OCI-LY7 (cell line): ENCODE measurements at regions of chr11 and their contacts with region 1.

Region 1: DNA sequence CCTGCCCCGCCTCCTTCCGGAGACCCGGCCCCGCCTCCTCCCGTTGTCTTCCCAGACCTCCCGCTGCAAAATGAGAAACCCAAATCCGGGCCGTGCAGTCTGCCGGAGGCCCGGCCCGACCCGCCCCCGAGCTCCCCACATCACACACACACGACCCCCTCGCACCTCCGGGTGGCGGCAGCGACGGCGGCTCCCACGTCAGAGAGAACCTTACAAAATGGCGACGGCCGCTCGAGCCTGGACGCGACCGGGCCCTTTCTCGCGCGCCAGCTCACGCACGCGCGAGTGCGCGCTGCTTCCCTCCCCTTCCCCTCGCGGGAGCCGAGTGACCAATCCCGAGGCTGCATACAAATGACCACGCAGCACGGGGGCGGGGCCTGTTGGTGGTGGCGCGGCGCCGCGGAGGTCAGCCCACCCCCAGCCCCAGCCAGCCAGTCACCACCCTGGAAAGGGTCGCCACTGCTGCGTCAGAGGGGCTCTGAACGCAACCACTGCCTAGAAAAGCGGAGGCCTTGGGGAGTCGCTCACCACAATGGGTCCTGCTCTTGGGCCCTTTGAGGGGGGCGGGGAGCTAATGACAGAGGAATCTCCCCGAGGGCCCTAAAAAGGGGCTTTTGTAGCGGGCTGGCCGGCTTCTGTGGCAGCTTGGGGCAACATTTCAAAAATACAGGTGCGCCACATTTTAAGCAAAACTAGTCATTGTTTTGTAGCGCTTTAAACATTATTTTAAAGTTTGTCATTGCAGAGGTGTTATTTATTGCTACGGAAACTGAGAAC is at the start of gene RBM4B:
- DNase-seq: peak; percentile 97
- H3K4me3 ChIP-seq: peak within 1 kb of the TSS; percentile 77
- H3K27ac ChIP-seq: peak within 1 kb of the TSS; percentile 87
- H3K4me1 ChIP-seq: peaks cover 44% of the 10 kb centered on the region
- CTCF ChIP-seq: no peak
- total RNA-seq, gene RBM4B: 29.1 and 40.0 TPM in 2 replicates

Region 2: GRCh38 chr11:66408488-66409214 is 269.1 kb before region 1 on chr11:
- CTCF ChIA-PET with region 1: no interaction called
- POLR2A ChIA-PET with region 1: no interaction called
- intact Hi-C with region 1: loop called (anchors 1 kb)
- DNase-seq: peak; percentile 85
- H3K4me3 ChIP-seq: no peak overlapping the region
- H3K27ac ChIP-seq: no peak overlapping the region
- H3K4me1 ChIP-seq: peaks cover 4% of the 10 kb centered on the region
- CTCF ChIP-seq: peak; percentile 100

Region 3: GRCh38 chr11:66545701-66546367 is 132.0 kb before region 1 on chr11 and contains the start of gene ZDHHC24:
- CTCF ChIA-PET with region 1: interaction called, 7 read pairs
- POLR2A ChIA-PET with region 1: interaction called, 11 read pairs
- intact Hi-C with region 1: loop called (anchors 1 kb)
- DNase-seq: peak; percentile 91
- H3K4me3 ChIP-seq: peak within 1 kb of the TSS; percentile 89
- H3K27ac ChIP-seq: peak within 1 kb of the TSS; percentile 79
- H3K4me1 ChIP-seq: peaks cover 33% of the 10 kb centered on the region
- CTCF ChIP-seq: no peak
- total RNA-seq, gene ZDHHC24: 11.3 and 11.9 TPM in 2 replicates

Region 4: GRCh38 chr11:66592457-66593302 is 85.1 kb before region 1 on chr11 and contains the starts of genes CCDC87 and CCS:
- CTCF ChIA-PET with region 1: interaction called, 3 read pairs
- POLR2A ChIA-PET with region 1: interaction called, 4 read pairs
- intact Hi-C with region 1: loop called (anchors 5 kb)
- DNase-seq: peak; percentile 97
- H3K4me3 ChIP-seq: peak within 1 kb of the TSS; percentile 73
- H3K27ac ChIP-seq: no peak within 1 kb of the TSS
- H3K4me1 ChIP-seq: peaks cover 29% of the 10 kb centered on the region
- CTCF ChIP-seq: peak; percentile 71
- total RNA-seq, gene CCDC87: 0.13 and 0.26 TPM in 2 replicates
- total RNA-seq, gene CCS: 31.7 and 32.6 TPM in 2 replicates

Region 5: DNA sequence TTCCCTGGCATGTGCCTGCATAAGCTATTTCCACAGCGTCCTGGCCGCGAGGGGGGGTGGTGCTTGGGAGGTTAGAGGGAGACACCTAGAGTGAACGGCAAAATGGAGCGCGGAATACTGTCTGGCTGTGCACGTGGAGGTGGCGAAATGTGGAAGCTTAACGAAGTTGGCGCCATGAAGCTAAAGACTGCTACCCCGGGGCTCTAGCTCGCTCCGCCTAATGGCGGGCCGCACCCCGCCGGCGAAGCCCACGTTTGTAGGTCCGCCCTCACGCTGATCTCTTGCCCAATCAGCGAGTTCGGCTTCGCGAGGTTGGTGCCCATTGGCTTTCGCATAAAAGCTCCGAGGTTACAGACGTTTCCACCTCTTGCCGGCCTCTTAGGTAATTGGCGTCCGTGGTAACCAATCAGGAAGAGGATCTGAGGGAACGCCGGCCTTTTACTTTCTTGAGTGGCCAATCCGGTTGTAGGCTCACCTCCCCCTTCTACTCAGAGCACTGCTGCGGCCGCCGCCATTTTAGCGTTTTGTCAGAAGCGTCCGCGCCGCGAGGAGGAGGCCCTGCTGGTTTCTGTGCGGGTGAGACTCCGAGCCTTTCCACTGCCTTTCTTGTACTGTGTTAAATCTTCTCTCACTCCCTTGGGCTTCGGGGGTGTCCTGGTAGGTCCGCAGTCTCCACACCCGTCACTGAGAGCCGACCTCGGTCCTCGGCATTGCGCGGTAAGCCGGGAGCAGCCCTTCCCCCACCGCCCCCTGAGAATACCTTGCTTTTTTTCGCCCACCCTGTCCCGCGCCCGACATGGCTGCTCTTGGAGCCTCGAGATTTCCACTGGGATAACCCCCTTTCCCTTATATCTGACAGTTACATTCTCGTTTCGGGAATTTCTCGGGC is 39.4 kb before region 1 on chr11 and contains the start of gene RBM4:
- CTCF ChIA-PET with region 1: no interaction called
- POLR2A ChIA-PET with region 1: interaction called, 5 read pairs
- intact Hi-C with region 1: loop called (anchors 2 kb)
- DNase-seq: peak; percentile 100
- H3K4me3 ChIP-seq: peak within 1 kb of the TSS; percentile 95
- H3K27ac ChIP-seq: peak within 1 kb of the TSS; percentile 71
- H3K4me1 ChIP-seq: peaks cover 55% of the 10 kb centered on the region
- CTCF ChIP-seq: 0 out of 2 replicates have a peak, but pooled peaks have one; percentile 29
- total RNA-seq, gene RBM4: 66.0 and 93.9 TPM in 2 replicates

Region 6: GRCh38 chr11:66883016-66883968 is 205.5 kb after region 1 on chr11:
- CTCF ChIA-PET with region 1: no interaction called
- POLR2A ChIA-PET with region 1: no interaction called
- intact Hi-C with region 1: no loop called
- DNase-seq: peak; percentile 75
- H3K4me3 ChIP-seq: no peak overlapping the region
- H3K27ac ChIP-seq: no peak overlapping the region
- H3K4me1 ChIP-seq: peaks cover 6% of the 10 kb centered on the region
- CTCF ChIP-seq: peak; percentile 86